ENCODE measurements at regions of chr15 and their contacts with region 1.

Region 1: GRCh38 chr15:71011503-71012155 is 103.6 kb upstream of the THSD4 start:
- DNase-seq: peak; percentile 57
- H3K4me3 ChIP-seq: no peak overlapping the region
- H3K27ac ChIP-seq: peak overlapping the region; percentile 46
- H3K4me1 ChIP-seq: peaks cover 15% of the 10 kb centered on the region
- H3K27me3 ChIP-seq: no peaks in the 10 kb centered on the region
- CTCF ChIP-seq: peak; percentile 91 to 95

Region 2: DNA sequence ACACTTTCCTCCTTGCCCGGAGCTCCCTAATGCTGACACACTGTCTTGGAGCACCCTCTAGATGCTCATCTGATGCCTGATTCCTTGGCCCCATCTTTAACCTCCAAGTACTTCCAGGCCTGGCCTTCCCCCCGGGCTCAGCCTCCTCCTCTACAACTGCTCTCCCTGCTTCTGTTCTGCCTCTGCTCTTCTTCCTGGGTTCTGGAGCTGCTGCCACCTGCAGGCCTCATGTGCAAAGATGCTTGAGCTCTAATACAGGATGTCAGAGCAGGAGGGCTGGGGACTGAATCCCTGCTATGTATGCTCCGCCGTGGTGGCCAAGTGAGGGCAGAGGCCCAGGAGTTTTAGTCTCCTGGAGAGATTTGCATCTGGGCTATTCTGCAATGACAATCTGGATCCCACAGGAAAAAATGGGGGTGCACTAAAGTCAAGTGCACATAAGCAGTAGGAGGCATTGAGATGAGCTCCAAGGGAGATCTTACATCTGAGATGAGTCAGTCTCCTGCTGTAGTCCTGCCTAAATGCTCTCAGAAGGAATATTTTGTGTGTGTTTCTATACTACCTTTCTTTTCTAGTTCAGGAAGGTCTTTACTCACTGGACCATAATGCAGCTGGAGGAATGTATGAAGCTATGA is 544.6 kb before region 1 on chr15:
- CTCF ChIA-PET with region 1: no interaction called
- dilution Hi-C with region 1: no loop called
- in situ Hi-C with region 1: no loop called
- intact Hi-C with region 1: no loop called
- DNase-seq: peak; percentile 51
- H3K4me3 ChIP-seq: no peak overlapping the region
- H3K27ac ChIP-seq: no peak overlapping the region
- H3K4me1 ChIP-seq: peaks cover 6% of the 10 kb centered on the region
- H3K27me3 ChIP-seq: peaks cover 20% of the 10 kb centered on the region
- CTCF ChIP-seq: peak; percentile 70 to 83

Region 3: GRCh38 chr15:70892002-70892914 is 119.4 kb before region 1 on chr15 and contains the starts of genes LRRC49 and THAP10:
- CTCF ChIA-PET with region 1: no interaction called
- dilution Hi-C with region 1: no loop called
- in situ Hi-C with region 1: no loop called
- intact Hi-C with region 1: loop called (anchors 5 kb)
- DNase-seq: peak; percentile 97
- H3K4me3 ChIP-seq: peak within 1 kb of the TSS; percentile 80 to 88 (median 85)
- H3K27ac ChIP-seq: peak within 1 kb of the TSS; percentile 79
- H3K4me1 ChIP-seq: peaks cover 13% of the 10 kb centered on the region
- H3K27me3 ChIP-seq: no peaks in the 10 kb centered on the region
- CTCF ChIP-seq: peak in 1 of 2 donors; percentile 0
- total RNA-seq, gene LRRC49: 9.0 to 21.2 TPM
- total RNA-seq, gene THAP10: 3.0 to 4.9 TPM

Region 4: DNA sequence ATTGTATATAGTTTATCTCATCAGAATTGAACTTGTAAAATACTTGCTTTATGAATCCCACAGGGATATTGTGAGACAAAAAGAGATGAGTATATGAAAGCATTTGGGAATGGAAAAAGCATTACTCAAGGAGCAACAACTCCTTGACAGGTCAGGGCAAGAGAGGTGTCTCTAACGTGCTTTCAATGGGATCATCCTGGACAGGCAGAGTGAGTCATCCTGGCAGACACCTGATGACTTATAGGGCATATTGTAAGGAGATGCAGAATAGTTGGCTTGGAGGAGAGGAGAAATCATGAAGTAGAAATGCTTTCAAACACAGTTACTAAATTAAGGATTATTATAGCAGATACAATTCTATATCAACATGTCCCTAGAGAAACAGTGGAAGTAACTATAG is 31.7 kb after region 1 on chr15:
- CTCF ChIA-PET with region 1: interaction called, 9 read pairs
- dilution Hi-C with region 1: no loop called
- in situ Hi-C with region 1: no loop called
- intact Hi-C with region 1: loop called (anchors 2 kb)
- DNase-seq: peak; percentile 95
- H3K4me3 ChIP-seq: no peak overlapping the region
- H3K27ac ChIP-seq: peak overlapping the region; percentile 89
- H3K4me1 ChIP-seq: peaks cover 31% of the 10 kb centered on the region
- H3K27me3 ChIP-seq: no peaks in the 10 kb centered on the region
- CTCF ChIP-seq: no peak

Region 5: GRCh38 chr15:71079208-71080021 is 67.8 kb after region 1 on chr15:
- CTCF ChIA-PET with region 1: no interaction called
- dilution Hi-C with region 1: no loop called
- in situ Hi-C with region 1: no loop called
- intact Hi-C with region 1: no loop called
- DNase-seq: peak; percentile 89
- H3K4me3 ChIP-seq: no peak overlapping the region
- H3K27ac ChIP-seq: peak overlapping the region; percentile 81
- H3K4me1 ChIP-seq: peaks cover 27% of the 10 kb centered on the region
- H3K27me3 ChIP-seq: no peaks in the 10 kb centered on the region
- CTCF ChIP-seq: no peak

Region 6: GRCh38 chr15:71093121-71094024 is 81.7 kb after region 1 on chr15:
- CTCF ChIA-PET with region 1: no interaction called
- dilution Hi-C with region 1: no loop called
- in situ Hi-C with region 1: loop called in 1 of 2 experiments (anchors 10 kb)
- intact Hi-C with region 1: no loop called
- DNase-seq: peak; percentile 93
- H3K4me3 ChIP-seq: no peak overlapping the region
- H3K27ac ChIP-seq: peak overlapping the region; percentile 72
- H3K4me1 ChIP-seq: peaks cover 38% of the 10 kb centered on the region
- H3K27me3 ChIP-seq: no peaks in the 10 kb centered on the region
- CTCF ChIP-seq: no peak

Region 7: GRCh38 chr15:71103102-71103676 is 91.6 kb after region 1 on chr15:
- CTCF ChIA-PET with region 1: no interaction called
- dilution Hi-C with region 1: no loop called
- in situ Hi-C with region 1: loop called in 1 of 2 experiments (anchors 10 kb)
- intact Hi-C with region 1: loop called (anchors 1 kb)
- DNase-seq: peak; percentile 69
- H3K4me3 ChIP-seq: no peak overlapping the region
- H3K27ac ChIP-seq: peak overlapping the region; percentile 33
- H3K4me1 ChIP-seq: peaks cover 25% of the 10 kb centered on the region
- H3K27me3 ChIP-seq: no peaks in the 10 kb centered on the region
- CTCF ChIP-seq: peak; percentile 56 to 69

Region 8: DNA sequence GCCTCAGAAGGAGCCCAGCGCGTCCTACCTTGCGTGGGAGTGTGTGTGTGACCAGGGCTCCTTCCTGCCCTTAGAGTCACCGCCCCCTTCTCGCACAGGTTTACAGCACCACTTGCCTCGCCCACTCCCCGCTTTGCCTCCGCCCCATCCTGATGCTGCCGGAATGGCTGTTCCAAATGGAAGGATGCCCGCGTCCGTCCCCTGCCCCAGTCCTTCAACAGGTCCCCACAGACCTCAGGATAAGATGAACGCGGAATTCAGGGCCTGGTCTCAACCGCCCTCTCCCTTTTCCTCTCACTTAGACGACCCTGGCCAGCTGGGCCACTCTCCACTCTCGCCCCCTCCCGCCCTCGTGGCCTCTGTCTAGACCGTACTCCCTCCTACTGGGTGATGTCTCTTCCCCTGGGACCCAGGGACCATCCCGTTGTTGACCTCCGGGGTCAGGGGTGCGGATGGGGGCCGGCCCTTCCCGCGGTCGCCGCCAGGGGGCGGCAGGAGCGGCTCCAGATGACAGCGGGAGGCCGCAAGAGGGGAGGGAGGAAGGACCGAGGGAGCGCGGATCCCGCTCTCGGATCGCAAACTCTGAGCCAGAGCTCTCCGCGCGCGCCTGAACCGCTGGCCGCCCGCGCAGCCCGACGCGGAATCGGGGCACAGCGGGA is 103.4 kb after region 1 on chr15 and contains the start of gene THSD4:
- CTCF ChIA-PET with region 1: no interaction called
- dilution Hi-C with region 1: no loop called
- in situ Hi-C with region 1: no loop called
- intact Hi-C with region 1: loop called (anchors 1 kb)
- DNase-seq: peak; percentile 66
- H3K4me3 ChIP-seq: peak within 1 kb of the TSS; percentile 71 to 75 (median 75)
- H3K27ac ChIP-seq: peak within 1 kb of the TSS; percentile 90
- H3K4me1 ChIP-seq: peaks cover 31% of the 10 kb centered on the region
- H3K27me3 ChIP-seq: no peaks in the 10 kb centered on the region
- CTCF ChIP-seq: peak; percentile 87 to 99
- total RNA-seq, gene THSD4: 87.7 to 111 TPM

Region 9: DNA sequence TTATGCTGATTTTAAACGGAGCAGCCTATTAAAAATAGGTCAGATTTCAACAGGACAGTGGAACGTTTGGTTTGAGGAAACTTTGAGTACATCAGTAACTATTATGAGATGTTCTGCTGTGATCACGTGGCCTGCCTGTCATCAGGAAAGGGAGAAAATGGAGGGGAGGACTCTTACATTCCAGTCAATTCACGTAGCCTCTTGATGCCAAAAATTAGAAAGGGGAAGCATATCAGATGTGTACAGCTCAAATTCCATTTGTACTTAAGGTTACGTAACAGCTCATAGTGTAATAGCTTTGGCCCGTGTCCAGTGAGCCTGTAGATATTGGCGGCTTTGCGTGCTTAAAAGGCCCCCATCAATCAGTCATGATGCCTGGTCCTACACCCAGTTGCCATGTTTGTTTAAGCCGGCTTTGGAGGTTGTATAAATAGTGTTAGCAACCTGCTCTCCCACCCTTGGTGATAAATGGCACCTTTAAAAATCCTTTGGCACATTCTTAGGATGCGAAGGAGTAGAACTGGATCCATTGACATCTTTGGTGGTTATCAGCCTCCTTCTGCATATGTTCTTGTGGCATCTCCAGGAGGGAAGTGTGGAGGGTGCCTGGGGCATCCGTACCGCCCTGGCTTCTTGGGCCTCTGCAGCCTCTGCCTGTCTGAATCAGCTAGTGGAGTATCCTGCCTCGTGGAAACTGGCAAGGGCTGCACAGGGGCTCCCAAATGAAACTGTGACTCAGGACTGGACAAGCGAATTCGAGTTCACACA is 267.5 kb after region 1 on chr15:
- CTCF ChIA-PET with region 1: no interaction called
- dilution Hi-C with region 1: no loop called
- in situ Hi-C with region 1: loop called in 1 of 2 experiments (anchors 25 kb)
- intact Hi-C with region 1: no loop called
- DNase-seq: peak; percentile 97
- H3K4me3 ChIP-seq: no peak overlapping the region
- H3K27ac ChIP-seq: peak overlapping the region; percentile 92
- H3K4me1 ChIP-seq: peaks cover 73% of the 10 kb centered on the region
- H3K27me3 ChIP-seq: no peaks in the 10 kb centered on the region
- CTCF ChIP-seq: no peak

Measured in mammary epithelial cell (primary cell).